Activated CD4-positive, alpha-beta memory T cell treated with anti-CD3 and anti-CD28 coated beads for 36 hours (primary cell): ENCODE measurements at regions of chr10 and their contacts with region 1.

Region 1: GRCh38 chr10:49407552-49408137 is 11.8 kb upstream of the DRGX start:
- DNase-seq: peak; percentile 79
- H3K4me3 Mint-ChIP-seq: no peak overlapping the region
- H3K27ac Mint-ChIP-seq: no peak overlapping the region
- H3K4me1 Mint-ChIP-seq: no peaks in the 10 kb centered on the region
- H3K27me3 Mint-ChIP-seq: peaks cover 27% of the 10 kb centered on the region

Region 2: GRCh38 chr10:49335364-49335972 is 72.2 kb before region 1 on chr10:
- CTCF ChIA-PET with region 1: no interaction called
- POLR2A ChIA-PET with region 1: no interaction called
- intact Hi-C with region 1: no loop called
- DNase-seq: no peak
- H3K4me3 Mint-ChIP-seq: no peak overlapping the region
- H3K27ac Mint-ChIP-seq: peak overlapping the region; percentile 10
- H3K4me1 Mint-ChIP-seq: peaks cover 10% of the 10 kb centered on the region
- H3K27me3 Mint-ChIP-seq: peaks cover 4% of the 10 kb centered on the region

Region 3: GRCh38 chr10:49484486-49485235 is 77.0 kb after region 1 on chr10:
- CTCF ChIA-PET with region 1: no interaction called
- POLR2A ChIA-PET with region 1: no interaction called
- intact Hi-C with region 1: no loop called
- DNase-seq: no peak
- H3K4me3 Mint-ChIP-seq: no peak overlapping the region
- H3K27ac Mint-ChIP-seq: no peak overlapping the region
- H3K4me1 Mint-ChIP-seq: peaks cover 4% of the 10 kb centered on the region
- H3K27me3 Mint-ChIP-seq: no peaks in the 10 kb centered on the region

Region 4: DNA sequence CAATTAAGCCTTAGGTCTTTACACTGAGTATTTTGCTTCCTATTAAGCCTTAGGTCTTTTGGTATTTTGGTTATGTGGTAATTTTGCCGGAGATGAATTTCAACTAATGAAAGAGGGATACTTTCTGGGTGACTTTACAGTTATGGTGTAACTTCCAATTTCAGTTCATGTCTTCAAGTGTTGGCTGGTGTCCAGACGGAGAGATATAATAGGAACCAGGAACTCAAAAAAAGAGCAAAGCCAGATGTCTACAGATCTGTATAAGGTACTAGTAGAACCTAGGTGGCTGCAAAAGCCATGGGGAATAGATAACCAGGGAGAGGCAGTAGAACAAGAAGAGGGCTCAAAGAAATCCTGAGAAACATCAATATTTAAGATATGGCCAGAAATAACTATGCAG is 119.0 kb after region 1 on chr10:
- CTCF ChIA-PET with region 1: interaction called, 45 read pairs
- POLR2A ChIA-PET with region 1: no interaction called
- intact Hi-C with region 1: no loop called
- DNase-seq: no peak
- H3K4me3 Mint-ChIP-seq: no peak overlapping the region
- H3K27ac Mint-ChIP-seq: no peak overlapping the region
- H3K4me1 Mint-ChIP-seq: peaks cover 4% of the 10 kb centered on the region
- H3K27me3 Mint-ChIP-seq: no peaks in the 10 kb centered on the region